Endothelial cell of umbilical vein (primary cell): ENCODE measurements at regions of chr12 and their contacts with region 1.

Region 1: GRCh38 chr12:124655698-124656516 is 88.5 kb upstream of the NCOR2 start:
- DNase-seq: peak; percentile 87
- H3K4me3 ChIP-seq: no peak overlapping the region
- H3K27ac ChIP-seq: peak overlapping the region; percentile 91
- H3K4me1 ChIP-seq: peaks cover 51% of the 10 kb centered on the region
- H3K27me3 ChIP-seq: no peaks in the 10 kb centered on the region
- CTCF ChIP-seq: no peak
- POLR2A ChIP-seq: no peak

Region 2: GRCh38 chr12:124609041-124609995 is 46.6 kb before region 1 on chr12:
- CTCF ChIA-PET with region 1: no interaction called
- POLR2A ChIA-PET with region 1: no interaction called
- dilution Hi-C with region 1: no loop called
- intact Hi-C with region 1: loop called (anchors 5 kb)
- DNase-seq: peak; percentile 76
- H3K4me3 ChIP-seq: no peak overlapping the region
- H3K27ac ChIP-seq: no peak overlapping the region
- H3K4me1 ChIP-seq: peaks cover 23% of the 10 kb centered on the region
- H3K27me3 ChIP-seq: no peaks in the 10 kb centered on the region
- CTCF ChIP-seq: no peak
- POLR2A ChIP-seq: no peak

Region 3: GRCh38 chr12:124625867-124626675 is 29.8 kb before region 1 on chr12:
- CTCF ChIA-PET with region 1: interaction called, 13 read pairs
- POLR2A ChIA-PET with region 1: interaction called, 15 read pairs
- dilution Hi-C with region 1: no loop called
- intact Hi-C with region 1: loop called (anchors 1 kb)
- DNase-seq: peak; percentile 91
- H3K4me3 ChIP-seq: no peak overlapping the region
- H3K27ac ChIP-seq: peak overlapping the region; percentile 91
- H3K4me1 ChIP-seq: peaks cover 26% of the 10 kb centered on the region
- H3K27me3 ChIP-seq: no peaks in the 10 kb centered on the region
- CTCF ChIP-seq: no peak
- POLR2A ChIP-seq: peak; percentile 51

Region 4: GRCh38 chr12:124640056-124640455 is 15.9 kb before region 1 on chr12:
- CTCF ChIA-PET with region 1: interaction called, 10 read pairs
- POLR2A ChIA-PET with region 1: interaction called, 3 read pairs
- dilution Hi-C with region 1: no loop called
- intact Hi-C with region 1: no loop called
- DNase-seq: peak; percentile 26
- H3K4me3 ChIP-seq: no peak overlapping the region
- H3K27ac ChIP-seq: no peak overlapping the region
- H3K4me1 ChIP-seq: peaks cover 4% of the 10 kb centered on the region
- H3K27me3 ChIP-seq: no peaks in the 10 kb centered on the region
- CTCF ChIP-seq: no peak
- POLR2A ChIP-seq: no peak

Region 5: GRCh38 chr12:124720004-124720680 is 64.2 kb after region 1 on chr12:
- CTCF ChIA-PET with region 1: interaction called, 10 read pairs
- POLR2A ChIA-PET with region 1: no interaction called
- dilution Hi-C with region 1: no loop called
- intact Hi-C with region 1: loop called (anchors 1 kb)
- DNase-seq: peak; percentile 72
- H3K4me3 ChIP-seq: no peak overlapping the region
- H3K27ac ChIP-seq: peak overlapping the region; percentile 80
- H3K4me1 ChIP-seq: peaks cover 27% of the 10 kb centered on the region
- H3K27me3 ChIP-seq: no peaks in the 10 kb centered on the region
- CTCF ChIP-seq: peak; percentile 20 to 38
- POLR2A ChIP-seq: no peak